A549 (cell line): ENCODE measurements at regions of chr18 and their contacts with region 1.

Region 1: DNA sequence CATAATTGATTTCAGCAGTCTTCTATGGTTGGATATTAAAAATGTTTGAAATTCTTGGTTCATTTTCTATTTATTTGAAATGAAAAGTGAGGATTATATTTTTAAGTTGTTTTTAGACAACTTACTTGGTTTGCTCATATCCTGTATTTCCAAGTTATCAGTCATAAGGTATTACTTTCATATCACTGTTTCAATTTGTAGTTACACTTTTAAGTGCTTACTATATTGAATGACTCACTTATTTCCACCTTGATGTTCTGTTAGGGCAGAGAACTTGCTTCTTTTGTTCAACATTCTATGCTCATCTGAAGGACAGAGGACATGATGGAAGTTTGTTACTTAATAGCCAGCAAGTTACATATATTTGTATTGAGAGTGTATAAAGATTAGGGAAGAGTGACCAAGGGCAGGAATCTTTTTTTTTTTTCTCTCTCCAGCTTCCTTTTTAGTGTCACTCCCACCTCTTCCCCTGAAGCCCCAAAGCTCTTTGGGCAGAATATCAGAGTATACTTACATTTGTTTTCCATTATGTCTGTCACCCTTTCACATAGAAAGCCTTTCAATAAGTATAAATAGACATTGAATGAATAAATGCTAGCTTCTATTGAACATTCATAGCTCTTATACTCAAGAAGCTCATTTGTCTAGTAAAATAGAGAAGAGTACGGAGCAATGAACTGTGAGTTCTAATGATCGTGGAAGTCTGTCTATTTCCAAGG is 28.1 kb downstream of the PIK3C3 start:
- DNase-seq: no peak
- ATAC-seq: no peak
- H3K4me3 ChIP-seq: no peak overlapping the region
- H3K27ac ChIP-seq: no peak overlapping the region
- H3K4me1 ChIP-seq: no peaks in the 10 kb centered on the region
- CTCF ChIP-seq: no peak
- EP300 ChIP-seq: no peak
- POLR2A ChIP-seq: no peak
- RAD21 ChIP-seq: no peak

Region 2: DNA sequence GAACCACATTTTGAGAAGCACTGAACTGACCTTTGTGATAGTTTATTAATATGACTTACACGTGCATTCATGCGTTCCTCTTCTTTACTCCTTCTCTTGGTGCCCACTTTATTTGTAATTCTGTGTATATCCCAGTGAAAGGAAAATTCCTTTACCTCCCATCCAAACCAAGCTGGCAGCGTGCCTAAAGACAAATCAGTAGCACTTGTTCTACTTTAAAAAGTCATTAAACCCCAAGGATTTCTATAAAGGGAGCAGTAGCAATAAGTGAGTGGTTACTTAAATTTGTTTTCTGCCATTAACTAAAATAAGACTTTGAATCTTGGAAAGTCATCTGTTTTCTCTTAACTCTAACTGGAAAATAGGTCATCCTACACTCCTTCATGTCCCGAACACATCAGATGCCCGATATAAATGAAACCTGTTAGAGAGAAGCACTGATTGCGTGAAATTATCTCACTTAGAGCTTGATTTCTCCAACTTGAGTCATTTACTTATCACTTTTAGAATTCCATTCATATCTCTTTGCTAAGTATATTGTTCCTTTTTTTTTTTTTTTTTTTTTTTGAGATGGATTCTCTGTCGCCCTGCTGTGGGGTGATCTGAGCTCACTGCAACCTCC is 17.4 kb before region 1 on chr18:
- CTCF ChIA-PET with region 1: no interaction called
- POLR2A ChIA-PET with region 1: interaction called, 10 read pairs
- DNase-seq: no peak
- ATAC-seq: no peak
- H3K4me3 ChIP-seq: no peak overlapping the region
- H3K27ac ChIP-seq: no peak overlapping the region
- H3K4me1 ChIP-seq: no peaks in the 10 kb centered on the region
- CTCF ChIP-seq: no peak
- EP300 ChIP-seq: no peak
- POLR2A ChIP-seq: no peak
- RAD21 ChIP-seq: no peak